Prostate gland (tissue), 2 donors: ENCODE measurements at regions of chr10 and their contacts with region 1.

Region 1: GRCh38 chr10:98467506-98468346 is 21.0 kb upstream of the HPS1 start:
- DNase-seq: peak; percentile 83
- H3K4me3 ChIP-seq: peak overlapping the region; percentile 27 to 43
- H3K27ac ChIP-seq: no peak overlapping the region
- H3K4me1 ChIP-seq: peaks cover 2% of the 10 kb centered on the region
- H3K27me3 ChIP-seq: no peaks in the 10 kb centered on the region
- CTCF ChIP-seq: peak; percentile 67 to 88 (median 82)
- POLR2A ChIP-seq: no peak

Region 2: GRCh38 chr10:99248824-99249223 is 781.1 kb after region 1 on chr10:
- intact Hi-C with region 1: loop called (anchors 2 kb)
- DNase-seq: no peak
- H3K4me3 ChIP-seq: no peak overlapping the region
- H3K27ac ChIP-seq: no peak overlapping the region
- H3K4me1 ChIP-seq: no peaks in the 10 kb centered on the region
- H3K27me3 ChIP-seq: peaks cover 3% of the 10 kb centered on the region
- CTCF ChIP-seq: no peak
- POLR2A ChIP-seq: no peak